Activated naive CD8-positive, alpha-beta T cell treated with anti-CD3 and anti-CD28 coated beads, Interleukin-2, amount 10 ng/mL, durations not matched to agents 7 days and 5 days (primary cell): ENCODE measurements at regions of chr10 and their contacts with region 1.

Region 1: GRCh38 chr10:102473445-102474331 is 22.3 kb upstream of the C10orf95 start:
- DNase-seq: peak; percentile 56
- ATAC-seq: peak; percentile 87
- H3K4me3 Mint-ChIP-seq: peak overlapping the region; percentile 54
- H3K27ac Mint-ChIP-seq: peak overlapping the region; percentile 88
- H3K4me1 Mint-ChIP-seq: peaks cover 23% of the 10 kb centered on the region
- H3K27me3 Mint-ChIP-seq: no peaks in the 10 kb centered on the region

Region 2: GRCh38 chr10:102438374-102438773 is 35.3 kb before region 1 on chr10:
- POLR2A ChIA-PET with region 1: interaction called, 11 read pairs
- DNase-seq: no peak
- ATAC-seq: no peak
- H3K4me3 Mint-ChIP-seq: peak overlapping the region; percentile 90
- H3K27ac Mint-ChIP-seq: no peak overlapping the region
- H3K4me1 Mint-ChIP-seq: peaks cover 43% of the 10 kb centered on the region
- H3K27me3 Mint-ChIP-seq: no peaks in the 10 kb centered on the region